Right ventricle myocardium inferior (tissue), 1 donor: ENCODE measurements at regions of chr11 and their contacts with region 1.

Region 1: DNA sequence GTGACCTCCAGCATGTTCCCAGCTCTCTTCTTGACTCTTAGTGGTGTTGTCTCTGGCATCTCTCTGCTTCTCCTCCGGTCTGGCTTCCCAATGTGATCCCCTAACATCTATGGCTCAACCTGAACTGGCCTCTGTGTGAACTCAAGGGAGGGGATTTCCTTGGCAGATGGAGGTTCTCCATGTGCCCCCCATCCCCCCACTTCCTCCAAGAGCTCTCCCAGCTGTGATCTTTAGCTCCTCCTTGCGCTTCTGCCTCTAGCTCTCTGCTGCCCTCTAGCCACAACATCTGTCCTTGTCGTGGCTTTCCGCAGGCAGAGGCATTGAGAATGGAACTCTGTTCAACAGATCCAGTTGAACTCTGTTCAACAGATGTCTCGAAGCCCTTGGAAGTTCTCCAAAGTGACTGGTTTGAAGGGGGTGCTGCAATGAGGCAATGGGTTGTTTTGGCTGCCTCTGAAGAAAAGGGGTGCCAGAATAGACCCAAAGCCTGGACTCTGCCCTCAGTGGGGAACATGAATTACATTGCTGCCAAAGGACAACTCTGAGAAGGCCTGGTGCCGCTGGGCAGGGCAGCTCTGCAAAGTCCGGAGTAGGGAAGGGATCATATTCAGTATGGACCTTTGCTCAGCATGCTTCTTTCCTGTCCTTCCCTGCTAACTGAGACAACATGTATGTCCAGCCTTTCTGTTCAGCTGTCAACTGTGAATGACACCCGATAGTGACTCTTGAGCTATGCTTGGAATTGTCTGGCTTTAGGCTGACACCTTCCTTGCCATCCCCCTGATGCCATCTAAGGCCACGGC is 61.9 kb downstream of the ADM start:
- DNase-seq: peak; percentile 82
- ATAC-seq: peak; percentile 94

Region 2: GRCh38 chr11:10208131-10208575 is 158.6 kb before region 1 on chr11:
- intact Hi-C with region 1: loop called (anchors 5 kb)
- DNase-seq: no peak
- ATAC-seq: peak; percentile 34